MCF 10A (cell line): ENCODE measurements at regions of chr12 and their contacts with region 1.

Region 1: GRCh38 chr12:133037207-133038005 is at the start of gene ZNF84:
- DNase-seq: peak; percentile 98
- H3K4me3 Mint-ChIP-seq: peak within 1 kb of the TSS; percentile 87
- H3K27ac Mint-ChIP-seq: peak within 1 kb of the TSS; percentile 93
- H3K4me1 Mint-ChIP-seq: no peaks in the 10 kb centered on the region
- H3K27me3 Mint-ChIP-seq: no peaks in the 10 kb centered on the region
- CTCF ChIP-seq: no peak
- total RNA-seq, gene ZNF84: 24.4 and 30.3 TPM in 2 replicates

Region 2: GRCh38 chr12:132887513-132888351 is 149.7 kb before region 1 on chr12 and contains the start of gene CHFR:
- CTCF ChIA-PET with region 1: no interaction called
- POLR2A ChIA-PET with region 1: no interaction called
- intact Hi-C with region 1: loop called (anchors 5 kb)
- DNase-seq: peak; percentile 94
- H3K4me3 Mint-ChIP-seq: peak within 1 kb of the TSS; percentile 99
- H3K27ac Mint-ChIP-seq: peak within 1 kb of the TSS; percentile 100
- H3K4me1 Mint-ChIP-seq: no peaks in the 10 kb centered on the region
- H3K27me3 Mint-ChIP-seq: no peaks in the 10 kb centered on the region
- CTCF ChIP-seq: no peak
- total RNA-seq, gene CHFR: 41.0 and 42.4 TPM in 2 replicates

Region 3: GRCh38 chr12:132937476-132937875 is 99.9 kb before region 1 on chr12:
- CTCF ChIA-PET with region 1: no interaction called
- POLR2A ChIA-PET with region 1: no interaction called
- intact Hi-C with region 1: no loop called
- DNase-seq: no peak
- H3K4me3 Mint-ChIP-seq: no peak overlapping the region
- H3K27ac Mint-ChIP-seq: no peak overlapping the region
- H3K4me1 Mint-ChIP-seq: no peaks in the 10 kb centered on the region
- H3K27me3 Mint-ChIP-seq: no peaks in the 10 kb centered on the region
- CTCF ChIP-seq: no peak